ENCODE measurements at regions of chr5 and their contacts with region 1.

Region 1: DNA sequence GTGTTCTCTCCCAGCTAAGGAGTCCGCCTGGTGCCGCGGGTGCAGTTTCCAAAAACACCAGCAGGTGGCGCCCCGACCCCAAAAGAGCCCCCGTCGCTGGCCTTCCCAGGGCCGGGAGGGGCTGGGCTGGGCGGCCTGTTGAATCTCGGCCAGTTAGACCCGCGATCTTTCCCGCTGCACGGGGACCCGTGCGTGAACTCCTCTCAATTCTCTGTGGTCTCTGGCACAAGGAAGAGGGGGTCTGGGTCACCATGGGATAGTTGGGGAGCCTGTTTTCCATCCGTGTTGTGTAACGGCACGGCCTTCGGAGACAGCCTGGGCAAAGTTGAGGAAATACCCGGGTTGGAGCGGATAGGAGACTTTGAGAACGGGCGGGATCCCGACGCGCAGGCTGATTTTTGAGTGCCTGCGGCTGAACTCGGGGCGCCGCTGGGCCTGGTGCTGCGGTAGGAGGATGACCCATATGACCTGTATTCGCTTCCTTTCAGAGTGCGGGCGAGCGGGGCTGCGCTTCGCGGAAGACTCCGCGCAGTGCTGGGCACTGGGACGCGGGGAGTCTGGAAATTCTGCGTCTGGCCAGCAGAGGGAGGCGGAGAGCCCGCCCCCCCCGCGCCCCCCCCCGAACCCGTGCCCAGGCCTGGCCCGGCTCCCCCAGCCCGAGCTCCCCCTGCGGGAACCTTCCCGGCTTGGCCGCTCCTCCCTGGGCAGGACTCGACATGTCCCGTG is 7.9 kb upstream of the PSD2 start:
- DNase-seq: peak; percentile 9
- H3K4me3 ChIP-seq: peak overlapping the region; percentile 45
- H3K27me3 ChIP-seq: peaks cover 5% of the 10 kb centered on the region
- CTCF ChIP-seq: peak; percentile 98

Region 2: DNA sequence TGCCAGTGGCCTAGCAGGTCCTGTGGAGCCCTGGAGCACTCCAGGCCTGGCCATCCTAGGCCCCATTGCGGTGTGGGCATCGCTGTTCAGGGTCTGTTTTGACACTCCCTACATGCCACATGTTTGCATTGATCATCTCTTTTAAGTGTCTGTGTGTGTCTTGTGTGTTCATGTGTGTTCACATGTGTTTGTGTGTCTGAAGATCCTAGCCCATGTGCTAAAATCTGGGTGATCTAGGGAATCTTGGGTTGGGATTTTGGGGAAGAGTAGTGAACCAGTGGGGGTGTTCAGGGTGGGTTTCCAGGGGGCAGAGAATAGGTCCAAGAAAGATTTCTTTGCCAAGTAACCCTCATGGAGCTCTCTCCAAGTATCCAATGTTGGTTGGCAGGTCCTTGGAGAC is 16.2 kb after region 1 on chr5:
- CTCF ChIA-PET with region 1: interaction called, 15 read pairs
- POLR2A ChIA-PET with region 1: no interaction called
- DNase-seq: no peak
- H3K4me3 ChIP-seq: no peak overlapping the region
- H3K27me3 ChIP-seq: peaks cover 17% of the 10 kb centered on the region
- CTCF ChIP-seq: no peak

Region 3: GRCh38 chr5:139844472-139845145 is 56.9 kb after region 1 on chr5:
- CTCF ChIA-PET with region 1: interaction called, 64 read pairs
- POLR2A ChIA-PET with region 1: no interaction called
- DNase-seq: no peak
- H3K4me3 ChIP-seq: no peak overlapping the region
- H3K27me3 ChIP-seq: peaks cover 16% of the 10 kb centered on the region
- CTCF ChIP-seq: peak; percentile 84

Region 4: GRCh38 chr5:139863855-139864558 is 76.3 kb after region 1 on chr5:
- CTCF ChIA-PET with region 1: interaction called, 54 read pairs
- POLR2A ChIA-PET with region 1: no interaction called
- DNase-seq: no peak
- H3K4me3 ChIP-seq: no peak overlapping the region
- H3K27me3 ChIP-seq: peaks cover 16% of the 10 kb centered on the region
- CTCF ChIP-seq: peak; percentile 89

Region 5: DNA sequence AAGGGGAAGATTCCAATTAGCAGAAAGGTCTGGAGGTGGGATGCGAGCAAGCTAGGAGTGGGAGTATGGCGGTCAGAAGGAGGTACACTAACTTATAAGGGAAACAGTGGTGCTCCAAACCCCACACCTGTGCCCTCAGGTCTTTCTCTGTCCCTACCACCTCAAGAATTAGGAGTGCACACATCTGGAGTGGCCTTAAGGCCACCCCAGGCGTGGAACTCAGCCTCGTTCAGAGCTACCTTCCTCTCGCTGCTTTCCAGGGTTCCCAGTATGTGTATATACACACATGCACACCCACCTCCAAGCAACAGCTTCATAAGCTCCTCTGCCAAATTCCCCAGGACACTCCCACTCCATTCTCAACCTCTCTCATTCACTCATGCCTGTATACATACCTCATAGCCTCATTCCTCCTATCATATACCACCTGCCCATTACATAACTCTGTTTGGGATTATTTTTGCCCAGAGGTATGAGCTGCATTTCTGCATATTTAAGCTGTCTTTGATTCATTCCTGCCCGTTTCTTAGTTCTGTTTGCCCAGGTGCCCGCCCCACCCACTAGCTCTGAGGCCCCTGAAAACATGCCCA is 126.6 kb after region 1 on chr5:
- CTCF ChIA-PET with region 1: no interaction called
- POLR2A ChIA-PET with region 1: no interaction called
- DNase-seq: no peak
- H3K4me3 ChIP-seq: no peak overlapping the region
- H3K27me3 ChIP-seq: peaks cover 2% of the 10 kb centered on the region
- CTCF ChIP-seq: no peak